ENCODE measurements at regions of chr1 and their contacts with region 1.

Region 1: DNA sequence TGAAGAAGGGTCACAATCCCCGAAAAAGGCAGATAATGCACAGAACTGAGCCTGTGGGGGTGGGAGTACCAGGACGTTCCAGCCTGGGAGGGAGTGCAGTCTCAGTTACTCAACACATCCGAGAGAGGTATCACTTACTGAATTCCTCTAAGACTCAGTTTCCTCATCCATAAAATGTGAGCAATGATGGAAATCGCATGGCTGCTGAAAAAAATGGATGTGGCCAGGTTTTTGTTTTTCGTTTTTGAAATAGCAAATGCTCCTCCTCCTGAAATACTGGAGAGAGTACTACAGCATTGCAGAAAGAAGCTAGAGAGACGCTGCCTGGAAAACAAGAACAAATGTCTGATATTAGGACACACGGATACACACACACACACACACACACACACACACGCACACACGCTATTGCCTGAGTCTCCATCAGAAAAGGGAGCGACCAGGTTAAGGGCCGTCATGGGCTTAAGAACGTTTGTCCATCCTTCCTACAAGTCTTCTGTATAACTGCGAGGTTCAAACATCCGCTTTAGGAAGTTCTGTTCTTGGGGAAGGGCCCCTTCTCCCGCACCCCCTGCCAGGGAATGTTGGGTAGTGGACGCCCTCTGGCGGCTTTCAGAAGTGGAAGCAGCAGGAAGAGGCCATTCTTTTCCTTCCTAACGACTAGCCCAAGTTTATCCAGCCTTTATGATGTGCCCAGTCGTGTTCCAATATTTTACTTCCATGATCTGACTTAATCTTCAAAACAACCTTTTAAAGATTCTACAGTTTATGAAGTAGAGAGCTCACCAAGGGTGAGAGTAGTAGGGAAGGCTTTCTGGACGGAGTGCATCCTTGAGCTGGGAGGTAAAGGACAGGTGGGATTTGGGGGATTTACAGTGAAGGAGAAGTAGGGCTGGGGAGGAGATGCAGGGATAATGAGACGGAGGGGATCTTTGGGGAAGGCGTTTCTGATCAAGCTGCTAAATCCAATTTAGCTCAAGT is 699 bp upstream of the NES start:
- DNase-seq: peak; percentile 75 to 79
- H3K4me3 ChIP-seq: peak overlapping the region; percentile 69
- H3K4me3 Mint-ChIP-seq: peak overlapping the region; percentile 86
- H3K27ac Mint-ChIP-seq: peak overlapping the region; percentile 75
- H3K4me1 ChIP-seq: peaks cover 21% of the 10 kb centered on the region; the same call in 1 of the 2 replicates
- H3K4me1 Mint-ChIP-seq: no peaks in the 10 kb centered on the region
- H3K27me3 ChIP-seq: 0 out of 2 replicates have a peak, but pooled peaks cover 2% of the 10 kb centered on the region
- H3K27me3 Mint-ChIP-seq: peaks cover 8% of the 10 kb centered on the region
- CTCF ChIP-seq: peak; percentile 78 to 87

Region 2: GRCh38 chr1:156435545-156436141 is 242.3 kb before region 1 on chr1:
- CTCF ChIA-PET with region 1: no interaction called
- POLR2A ChIA-PET with region 1: no interaction called
- intact Hi-C with region 1: no loop called
- DNase-seq: no peak
- H3K4me3 ChIP-seq: peak overlapping the region; percentile 3; the same call in 1 of the 2 replicates
- H3K4me3 Mint-ChIP-seq: peak overlapping the region; percentile 69
- H3K27ac Mint-ChIP-seq: no peak overlapping the region
- H3K4me1 ChIP-seq: peaks cover 4% of the 10 kb centered on the region; the same call in 1 of the 2 replicates
- H3K4me1 Mint-ChIP-seq: peaks cover 12% of the 10 kb centered on the region
- H3K27me3 ChIP-seq: peaks cover 3% of the 10 kb centered on the region; the same call in 1 of the 2 replicates
- H3K27me3 Mint-ChIP-seq: peaks cover 48% of the 10 kb centered on the region
- CTCF ChIP-seq: no peak

Region 3: GRCh38 chr1:156553860-156554480 is 123.9 kb before region 1 on chr1:
- CTCF ChIA-PET with region 1: no interaction called
- POLR2A ChIA-PET with region 1: no interaction called
- intact Hi-C with region 1: no loop called
- DNase-seq: no peak
- H3K4me3 ChIP-seq: no peak overlapping the region
- H3K4me3 Mint-ChIP-seq: no peak overlapping the region
- H3K27ac Mint-ChIP-seq: no peak overlapping the region
- H3K4me1 ChIP-seq: no peaks in the 10 kb centered on the region
- H3K4me1 Mint-ChIP-seq: peaks cover under 1% of the 10 kb centered on the region
- H3K27me3 ChIP-seq: no peaks in the 10 kb centered on the region
- H3K27me3 Mint-ChIP-seq: no peaks in the 10 kb centered on the region
- CTCF ChIP-seq: no peak

Region 4: DNA sequence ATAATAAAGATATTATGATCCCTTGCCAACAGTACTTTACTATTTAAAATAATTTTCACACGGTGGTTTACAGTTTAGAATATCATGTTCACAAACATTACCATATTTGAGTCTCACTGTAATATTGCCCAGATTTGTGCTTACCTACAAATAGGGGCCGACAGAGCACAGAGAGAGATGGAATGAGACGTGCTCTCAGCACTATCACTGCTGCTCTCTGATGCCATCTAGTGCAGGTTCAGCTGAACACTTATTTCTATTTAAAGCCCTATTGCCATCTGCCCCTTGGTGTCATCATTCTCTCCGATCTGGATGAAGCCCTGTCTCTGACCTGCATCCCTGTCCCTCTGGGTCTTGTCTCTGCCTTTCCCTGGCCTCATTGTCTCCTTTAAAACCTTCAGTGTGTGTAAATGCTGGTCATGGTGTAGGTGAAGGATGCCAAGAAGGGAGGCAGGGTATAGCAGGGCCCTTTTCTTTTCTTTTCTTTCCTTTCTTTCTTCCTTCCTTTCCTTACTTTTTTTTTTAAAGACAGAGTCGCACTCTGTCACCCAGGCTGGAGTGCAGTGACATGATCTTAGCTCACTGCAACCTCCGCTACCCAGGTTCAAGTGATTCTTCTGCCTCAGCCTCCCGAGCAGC is 69.8 kb before region 1 on chr1:
- CTCF ChIA-PET with region 1: no interaction called
- POLR2A ChIA-PET with region 1: no interaction called
- intact Hi-C with region 1: no loop called
- DNase-seq: peak; percentile 71 to 78
- H3K4me3 ChIP-seq: no peak overlapping the region
- H3K4me3 Mint-ChIP-seq: no peak overlapping the region
- H3K27ac Mint-ChIP-seq: no peak overlapping the region
- H3K4me1 ChIP-seq: 0 out of 2 replicates have a peak, but pooled peaks cover 4% of the 10 kb centered on the region
- H3K4me1 Mint-ChIP-seq: peaks cover 16% of the 10 kb centered on the region
- H3K27me3 ChIP-seq: no peaks in the 10 kb centered on the region
- H3K27me3 Mint-ChIP-seq: no peaks in the 10 kb centered on the region
- CTCF ChIP-seq: peak; percentile 82 to 83

Region 5: DNA sequence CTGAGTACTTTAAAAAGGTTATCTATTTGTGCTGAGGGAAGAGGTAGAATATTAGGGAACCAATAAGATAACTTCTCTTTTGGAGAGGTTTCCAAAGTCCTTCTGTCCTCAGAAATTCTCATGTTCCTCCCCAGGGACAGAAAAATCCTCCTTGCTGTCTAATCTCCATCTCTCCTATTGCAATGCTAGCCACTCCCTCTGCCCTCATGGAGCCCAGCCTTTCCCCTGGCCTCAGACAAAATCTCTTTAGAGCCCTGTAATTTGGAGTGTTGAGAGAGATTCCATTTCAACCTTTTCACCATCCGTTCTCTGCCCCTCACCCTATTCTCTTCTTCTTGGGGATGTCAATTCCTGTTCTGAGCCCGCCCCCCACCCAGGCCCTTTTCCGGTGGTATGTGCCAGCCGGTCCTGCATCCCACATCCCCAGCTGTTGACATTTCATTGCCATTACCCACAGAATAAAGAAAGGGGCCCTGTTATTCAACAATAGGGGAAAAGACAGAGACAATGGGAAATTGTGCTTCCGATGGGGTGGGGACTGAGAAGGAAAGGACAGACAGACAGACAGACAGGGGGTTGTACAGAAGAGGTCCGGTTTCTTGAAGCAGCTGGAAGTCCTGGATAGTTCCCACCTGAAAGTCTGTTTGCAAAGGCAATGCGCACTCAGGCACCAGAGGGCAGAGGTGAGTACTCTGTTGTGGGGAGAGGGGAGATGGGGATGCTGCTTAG is 58.9 kb before region 1 on chr1 and contains the start of gene HAPLN2:
- CTCF ChIA-PET with region 1: interaction called, 19 read pairs
- POLR2A ChIA-PET with region 1: interaction called, 4 read pairs
- intact Hi-C with region 1: no loop called
- DNase-seq: peak; percentile 56 to 63
- H3K4me3 ChIP-seq: no peak within 1 kb of the TSS
- H3K4me3 Mint-ChIP-seq: no peak within 1 kb of the TSS
- H3K27ac Mint-ChIP-seq: no peak within 1 kb of the TSS
- H3K4me1 ChIP-seq: 0 out of 2 replicates have a peak, but pooled peaks cover under 1% of the 10 kb centered on the region
- H3K4me1 Mint-ChIP-seq: peaks cover 7% of the 10 kb centered on the region
- H3K27me3 ChIP-seq: no peaks in the 10 kb centered on the region; the same call in 1 of the 2 replicates
- H3K27me3 Mint-ChIP-seq: peaks cover 25% of the 10 kb centered on the region
- CTCF ChIP-seq: peak; percentile 60 to 82
- total RNA-seq, gene HAPLN2: not detected in 2 replicates

Region 6: DNA sequence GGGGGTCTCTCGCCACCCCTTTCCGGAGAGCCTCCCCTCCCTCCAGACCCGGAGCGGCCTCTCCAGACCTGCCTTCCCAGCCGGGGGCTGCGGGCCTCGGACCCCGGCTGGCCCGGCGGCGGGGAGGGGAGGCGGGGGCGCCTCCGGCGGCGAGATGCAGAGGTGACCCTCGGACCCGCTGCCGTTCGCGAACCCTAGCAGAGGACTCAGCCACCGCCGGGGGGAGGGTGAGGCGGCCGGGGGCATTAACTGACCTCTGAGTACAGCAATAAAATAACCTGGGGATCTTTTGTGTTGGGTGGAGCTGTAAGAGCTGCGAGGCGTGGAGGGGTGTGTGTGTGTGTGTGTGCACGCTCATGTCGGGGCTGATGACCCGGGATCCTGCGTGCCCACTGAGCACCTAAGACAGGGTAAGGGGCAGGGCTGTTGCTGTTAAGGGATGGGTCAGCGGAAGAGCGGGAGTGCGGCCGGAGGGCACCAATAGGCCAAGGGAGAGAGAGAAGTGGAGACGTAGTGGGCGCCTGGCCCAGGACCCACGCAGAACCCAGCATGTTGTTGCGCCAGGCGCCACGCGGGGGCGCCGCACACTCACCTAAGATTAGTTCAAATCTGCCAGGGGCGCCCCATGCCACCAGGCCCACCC is 52.3 kb before region 1 on chr1:
- CTCF ChIA-PET with region 1: interaction called, 19 read pairs
- POLR2A ChIA-PET with region 1: interaction called, 4 read pairs
- intact Hi-C with region 1: loop called (anchors 1 kb)
- DNase-seq: peak; percentile 50 to 62
- H3K4me3 ChIP-seq: peak overlapping the region; percentile 28
- H3K4me3 Mint-ChIP-seq: peak overlapping the region; percentile 64
- H3K27ac Mint-ChIP-seq: no peak overlapping the region
- H3K4me1 ChIP-seq: peaks cover 13% of the 10 kb centered on the region
- H3K4me1 Mint-ChIP-seq: peaks cover 17% of the 10 kb centered on the region
- H3K27me3 ChIP-seq: peaks cover 1% of the 10 kb centered on the region; the same call in 1 of the 2 replicates
- H3K27me3 Mint-ChIP-seq: peaks cover 21% of the 10 kb centered on the region
- CTCF ChIP-seq: peak; percentile 74 to 75

Region 7: GRCh38 chr1:156659994-156660751 is 17.7 kb before region 1 on chr1:
- CTCF ChIA-PET with region 1: interaction called, 61 read pairs
- POLR2A ChIA-PET with region 1: interaction called, 28 read pairs
- intact Hi-C with region 1: loop called (anchors 1 kb)
- DNase-seq: peak; percentile 95 to 97
- H3K4me3 ChIP-seq: peak overlapping the region; percentile 19
- H3K4me3 Mint-ChIP-seq: peak overlapping the region; percentile 77
- H3K27ac Mint-ChIP-seq: peak overlapping the region; percentile 92
- H3K4me1 ChIP-seq: peaks cover 43% of the 10 kb centered on the region
- H3K4me1 Mint-ChIP-seq: peaks cover 51% of the 10 kb centered on the region
- H3K27me3 ChIP-seq: no peaks in the 10 kb centered on the region
- H3K27me3 Mint-ChIP-seq: peaks cover 1% of the 10 kb centered on the region
- CTCF ChIP-seq: peak; percentile 98

Region 8: DNA sequence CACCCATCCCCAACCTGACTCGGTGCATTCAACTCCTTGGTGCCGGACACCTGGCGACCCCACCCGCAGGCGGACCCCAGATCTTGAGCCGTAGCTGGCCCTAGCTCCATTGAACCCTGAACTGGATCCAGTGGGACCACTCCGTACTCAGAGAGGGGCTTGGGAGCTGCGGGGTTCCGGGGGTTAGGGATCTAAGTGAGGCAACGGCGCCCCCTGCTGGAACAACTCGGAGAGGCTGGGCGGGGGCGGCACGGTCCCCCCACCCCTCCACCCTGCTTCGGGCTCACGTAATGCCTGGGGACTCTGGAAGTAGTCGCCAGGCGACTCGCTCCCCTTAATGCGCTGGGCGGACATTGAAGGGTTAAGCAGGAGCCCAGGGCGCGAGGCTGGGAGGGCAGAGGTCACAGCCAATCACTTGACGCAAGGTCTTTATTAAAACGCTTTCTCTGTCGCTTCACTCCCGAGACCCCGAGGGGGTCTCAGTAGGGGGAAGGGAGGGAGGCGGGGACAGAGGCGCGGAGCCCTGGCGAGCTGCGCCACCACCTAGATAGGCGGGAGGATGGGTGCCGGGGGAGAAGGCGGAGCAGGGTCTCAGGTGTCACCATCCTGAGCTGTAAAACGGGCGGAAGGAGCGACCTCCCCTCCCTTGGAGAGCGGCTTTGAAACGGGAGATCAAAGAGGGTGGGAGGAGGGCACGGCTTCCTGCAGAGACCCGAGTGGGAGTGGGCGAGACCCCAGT is 28.2 kb after region 1 on chr1:
- CTCF ChIA-PET with region 1: interaction called, 20 read pairs
- POLR2A ChIA-PET with region 1: interaction called, 3 read pairs
- intact Hi-C with region 1: no loop called
- DNase-seq: peak; percentile 79 to 83
- H3K4me3 ChIP-seq: peak overlapping the region; percentile 53
- H3K4me3 Mint-ChIP-seq: peak overlapping the region; percentile 90
- H3K27ac Mint-ChIP-seq: peak overlapping the region; percentile 86
- H3K4me1 ChIP-seq: peaks cover 7% of the 10 kb centered on the region
- H3K4me1 Mint-ChIP-seq: peaks cover 16% of the 10 kb centered on the region
- H3K27me3 ChIP-seq: no peaks in the 10 kb centered on the region
- H3K27me3 Mint-ChIP-seq: no peaks in the 10 kb centered on the region
- CTCF ChIP-seq: peak; percentile 73 to 87